ENCODE measurements at regions of chr14 and their contacts with region 1.

Region 1: DNA sequence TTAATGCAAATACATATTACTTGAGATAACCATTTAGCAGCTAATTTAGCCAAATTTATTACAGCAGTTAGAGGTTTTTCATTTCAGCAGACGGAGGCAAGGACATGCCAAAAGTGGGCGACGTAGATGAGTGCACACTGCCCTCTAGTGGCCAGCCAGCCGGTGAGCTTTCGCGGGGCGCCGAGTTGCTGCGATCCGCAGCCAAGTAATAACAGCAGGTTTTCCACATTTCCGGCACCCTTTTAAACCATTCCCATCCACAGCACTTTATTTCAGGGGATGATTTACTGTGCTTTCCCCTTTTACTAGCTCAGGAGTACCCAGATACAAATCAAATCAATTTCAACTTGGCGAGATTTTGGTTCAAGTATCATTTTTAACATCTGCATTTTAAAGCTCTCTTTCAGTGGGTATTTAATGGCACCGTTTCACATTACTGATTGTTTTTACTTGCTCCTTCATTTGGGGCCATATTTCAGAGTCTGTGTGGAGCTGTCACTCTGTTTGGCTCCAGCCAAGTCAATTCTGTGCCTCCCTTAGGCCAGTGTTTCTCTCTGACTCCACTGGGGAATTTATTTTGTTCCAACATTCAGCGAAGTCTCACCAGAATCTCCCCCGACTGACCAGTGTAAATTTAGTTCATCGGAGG is 158.0 kb downstream of the EGLN3 start:
- DNase-seq: peak; percentile 81
- H3K4me3 Mint-ChIP-seq: no peak overlapping the region
- H3K27ac Mint-ChIP-seq: no peak overlapping the region
- H3K4me1 Mint-ChIP-seq: no peaks in the 10 kb centered on the region
- H3K27me3 Mint-ChIP-seq: peaks cover 45% of the 10 kb centered on the region
- CTCF ChIP-seq: peak; percentile 62

Region 2: DNA sequence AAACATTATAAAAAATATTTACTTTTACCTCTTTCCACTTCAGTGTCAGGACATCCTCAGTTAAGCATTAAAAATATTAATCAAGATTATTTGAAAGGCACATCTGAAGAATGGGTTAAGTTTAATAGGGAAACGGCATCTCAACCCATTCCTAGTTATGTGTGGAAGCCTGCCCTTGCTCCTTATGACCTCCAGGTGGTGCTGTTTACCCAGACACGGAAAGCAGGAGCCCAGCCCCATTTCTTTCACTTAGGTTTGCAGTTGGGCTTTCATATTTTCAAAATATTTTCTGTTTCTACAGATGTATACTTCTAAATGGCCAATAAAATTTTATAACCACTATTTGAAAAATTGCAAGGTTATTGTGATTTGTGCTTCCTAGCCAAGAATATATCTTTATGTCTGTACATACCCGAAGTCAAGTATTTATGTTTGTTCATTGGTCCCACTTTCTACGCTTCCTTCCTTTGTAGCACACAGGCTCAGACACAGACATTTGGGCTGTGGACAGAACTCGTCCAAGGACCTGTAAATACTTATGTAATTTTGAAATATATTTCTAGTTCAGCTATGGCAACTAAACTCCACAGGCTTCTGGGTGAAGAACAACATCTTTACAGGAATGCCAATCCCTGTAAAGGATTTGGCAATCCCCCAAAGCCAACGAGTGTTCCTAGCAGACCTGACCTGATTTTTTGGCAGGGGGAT is 1216.6 kb before region 1 on chr14:
- CTCF ChIA-PET with region 1: no interaction called
- intact Hi-C with region 1: loop called (anchors 2 kb)
- DNase-seq: peak; percentile 51
- H3K4me3 Mint-ChIP-seq: no peak overlapping the region
- H3K27ac Mint-ChIP-seq: no peak overlapping the region
- H3K4me1 Mint-ChIP-seq: peaks cover 10% of the 10 kb centered on the region
- H3K27me3 Mint-ChIP-seq: peaks cover 37% of the 10 kb centered on the region
- CTCF ChIP-seq: peak; percentile 70

Region 3: DNA sequence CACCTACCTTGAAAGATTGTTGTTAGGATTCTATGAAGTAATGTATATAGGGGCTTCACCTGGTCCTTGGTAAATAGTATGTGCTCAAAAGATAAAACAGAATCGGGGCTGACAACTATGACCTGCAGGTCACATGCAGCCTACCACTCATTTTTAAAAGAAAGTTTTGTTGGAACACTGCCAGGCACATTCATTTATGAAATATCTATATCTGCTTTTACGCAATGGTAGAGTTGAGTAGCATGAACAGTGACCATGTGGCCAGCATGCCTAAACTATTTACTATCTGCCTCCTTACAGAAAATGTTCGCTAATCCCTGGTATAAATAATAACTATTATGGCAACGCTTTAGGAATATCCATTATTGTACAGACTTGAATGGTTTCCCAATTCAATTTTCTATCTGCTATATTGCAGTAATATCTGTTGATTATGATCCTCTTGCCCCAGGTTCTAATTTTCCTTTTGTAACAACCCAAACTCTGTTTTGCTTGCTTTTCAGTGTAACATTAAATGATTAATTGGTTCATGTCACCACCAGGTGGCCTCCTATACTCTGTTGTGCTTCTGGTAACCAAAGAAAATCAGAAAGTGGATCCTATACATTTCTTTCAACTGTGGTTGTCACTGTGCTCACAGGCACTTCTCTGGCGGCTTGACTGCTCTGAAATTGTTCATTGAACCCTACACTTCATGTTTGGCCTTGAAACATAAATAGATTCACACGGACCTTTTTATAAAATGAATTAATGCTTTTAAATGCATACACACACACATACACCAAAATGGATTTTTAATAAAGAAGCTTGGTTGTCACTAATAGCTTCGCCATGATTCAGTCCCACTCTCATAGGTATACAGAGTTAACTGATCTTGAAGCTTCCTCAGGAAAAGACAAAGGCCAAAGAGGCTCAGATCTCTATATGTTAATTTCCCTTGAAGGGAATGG is 1081.8 kb before region 1 on chr14:
- CTCF ChIA-PET with region 1: no interaction called
- intact Hi-C with region 1: loop called (anchors 1 kb)
- DNase-seq: peak; percentile 32
- H3K4me3 Mint-ChIP-seq: no peak overlapping the region
- H3K27ac Mint-ChIP-seq: no peak overlapping the region
- H3K4me1 Mint-ChIP-seq: no peaks in the 10 kb centered on the region
- H3K27me3 Mint-ChIP-seq: peaks cover 28% of the 10 kb centered on the region
- CTCF ChIP-seq: peak; percentile 39

Region 4: DNA sequence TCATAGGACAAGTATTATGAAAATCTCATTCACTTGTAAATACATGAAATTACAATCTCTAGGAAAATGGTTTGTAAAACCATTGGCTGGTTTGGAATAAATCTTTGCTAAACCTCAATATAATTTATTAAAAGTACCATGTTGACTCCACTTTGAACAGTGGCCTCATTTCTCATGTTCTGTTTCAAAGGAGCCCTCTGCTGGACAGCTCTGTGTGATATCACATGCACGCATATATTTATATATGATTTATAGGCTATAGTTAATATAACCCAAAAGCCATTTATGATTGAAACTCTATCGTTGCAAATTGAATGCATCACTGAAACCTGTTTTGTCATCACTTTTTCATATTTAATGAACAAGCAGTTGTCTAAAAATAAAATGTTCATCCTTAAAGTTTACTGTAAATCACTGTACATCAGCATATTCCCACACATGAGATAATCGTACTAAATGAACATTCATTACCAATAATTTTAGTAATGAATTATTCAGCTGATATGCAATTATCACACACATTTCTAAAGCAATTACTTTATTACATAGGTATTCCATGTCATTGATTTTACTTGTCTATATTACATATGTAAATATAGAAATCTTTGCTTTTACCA is 360.3 kb before region 1 on chr14:
- CTCF ChIA-PET with region 1: no interaction called
- intact Hi-C with region 1: loop called (anchors 1 kb)
- DNase-seq: no peak
- H3K4me3 Mint-ChIP-seq: no peak overlapping the region
- H3K27ac Mint-ChIP-seq: no peak overlapping the region
- H3K4me1 Mint-ChIP-seq: no peaks in the 10 kb centered on the region
- H3K27me3 Mint-ChIP-seq: no peaks in the 10 kb centered on the region
- CTCF ChIP-seq: no peak

Region 5: DNA sequence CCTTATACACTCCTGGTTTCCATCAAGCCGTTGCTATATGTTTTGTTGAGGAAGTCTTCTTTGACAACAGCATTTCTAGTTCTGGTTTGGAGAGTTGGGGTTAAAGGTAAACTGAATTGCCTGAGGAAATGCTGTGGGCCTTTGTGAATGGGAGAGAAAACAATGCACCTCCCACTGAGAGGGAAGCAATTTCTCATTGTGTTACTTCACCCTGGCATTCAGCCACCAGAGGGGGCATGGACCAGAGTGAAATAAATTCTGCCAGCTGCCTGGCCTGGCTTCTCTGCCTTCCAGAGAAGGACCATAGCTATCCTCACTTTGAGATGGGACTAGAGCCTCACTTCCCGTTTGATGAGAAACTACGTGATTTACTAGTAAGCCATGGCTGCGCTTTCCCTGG is 317.2 kb before region 1 on chr14:
- CTCF ChIA-PET with region 1: interaction called, 4 read pairs
- intact Hi-C with region 1: loop called (anchors 1 kb)
- DNase-seq: peak; percentile 58
- H3K4me3 Mint-ChIP-seq: no peak overlapping the region
- H3K27ac Mint-ChIP-seq: no peak overlapping the region
- H3K4me1 Mint-ChIP-seq: no peaks in the 10 kb centered on the region
- H3K27me3 Mint-ChIP-seq: peaks cover 72% of the 10 kb centered on the region
- CTCF ChIP-seq: peak; percentile 44

Region 6: DNA sequence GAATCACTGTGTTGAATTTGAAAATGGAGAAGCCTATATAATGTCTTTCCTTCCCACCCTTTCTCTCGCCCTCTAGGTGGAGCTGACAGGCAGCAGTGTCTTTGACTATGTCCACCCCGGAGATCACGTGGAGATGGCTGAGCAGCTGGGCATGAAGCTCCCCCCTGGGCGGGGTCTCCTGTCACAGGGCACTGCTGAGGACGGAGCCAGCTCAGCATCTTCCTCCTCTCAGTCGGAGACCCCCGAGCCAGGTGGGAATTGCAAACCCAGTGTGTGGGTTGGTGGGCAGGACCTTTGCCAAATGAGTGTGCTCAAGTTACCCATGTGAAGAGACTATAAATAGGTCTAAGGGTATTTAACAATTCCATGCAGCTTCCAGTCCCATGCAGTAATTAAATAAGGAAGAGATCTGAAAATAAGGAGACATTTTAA is 116.7 kb before region 1 on chr14:
- CTCF ChIA-PET with region 1: interaction called, 7 read pairs
- intact Hi-C with region 1: loop called (anchors 2 kb)
- DNase-seq: peak; percentile 53
- H3K4me3 Mint-ChIP-seq: no peak overlapping the region
- H3K27ac Mint-ChIP-seq: no peak overlapping the region
- H3K4me1 Mint-ChIP-seq: no peaks in the 10 kb centered on the region
- H3K27me3 Mint-ChIP-seq: peaks cover 21% of the 10 kb centered on the region
- CTCF ChIP-seq: no peak